B cell (primary cell): ENCODE measurements at regions of chr2 and their contacts with region 1.

Region 1: GRCh38 chr2:71226965-71227560 is at the start of gene PAIP2B:
- DNase-seq: peak; percentile 98
- ATAC-seq: peak; percentile 91
- H3K4me3 ChIP-seq: peak within 1 kb of the TSS; percentile 33 to 86 (median 79)
- H3K4me3 Mint-ChIP-seq: peak within 1 kb of the TSS; percentile 95
- H3K27ac ChIP-seq: peak within 1 kb of the TSS; percentile 63 to 82
- H3K27ac Mint-ChIP-seq: peak within 1 kb of the TSS; percentile 95
- H3K4me1 ChIP-seq: peaks cover 15 to 21% of the 10 kb centered on the region in 2 donors
- H3K4me1 Mint-ChIP-seq: peaks cover 28% of the 10 kb centered on the region
- H3K27me3 ChIP-seq: no peaks in the 10 kb centered on the region
- H3K27me3 Mint-ChIP-seq: peaks cover 5% of the 10 kb centered on the region
- CTCF ChIP-seq: no peak
- total RNA-seq, gene PAIP2B: 10.1 and 10.2 TPM in 2 replicates

Region 2: GRCh38 chr2:70977605-70978205 is 249.4 kb before region 1 on chr2:
- CTCF ChIA-PET with region 1: no interaction called
- POLR2A ChIA-PET with region 1: no interaction called
- intact Hi-C with region 1: loop called (anchors 5 kb)
- DNase-seq: peak; percentile 57
- ATAC-seq: no peak
- H3K4me3 ChIP-seq: peak overlapping the region; percentile 52 to 84 (median 64)
- H3K4me3 Mint-ChIP-seq: peak overlapping the region; percentile 95
- H3K27ac ChIP-seq: peak overlapping the region; percentile 43 to 79
- H3K27ac Mint-ChIP-seq: peak overlapping the region; percentile 93
- H3K4me1 ChIP-seq: peaks cover 16 to 22% of the 10 kb centered on the region in 2 donors
- H3K4me1 Mint-ChIP-seq: peaks cover 22% of the 10 kb centered on the region
- H3K27me3 ChIP-seq: no peaks in the 10 kb centered on the region
- H3K27me3 Mint-ChIP-seq: peaks cover 15% of the 10 kb centered on the region
- CTCF ChIP-seq: no peak

Region 3: GRCh38 chr2:71130113-71130904 is 96.8 kb before region 1 on chr2 and contains the starts of genes MCEE and MPHOSPH10:
- CTCF ChIA-PET with region 1: interaction called, 3 read pairs
- POLR2A ChIA-PET with region 1: no interaction called
- intact Hi-C with region 1: loop called (anchors 1 kb)
- DNase-seq: peak; percentile 92
- ATAC-seq: peak; percentile 93
- H3K4me3 ChIP-seq: peak within 1 kb of the TSS; percentile 82 to 97 (median 90)
- H3K4me3 Mint-ChIP-seq: no peak within 1 kb of the TSS
- H3K27ac ChIP-seq: peak within 1 kb of the TSS; percentile 73 to 81
- H3K27ac Mint-ChIP-seq: no peak within 1 kb of the TSS
- H3K4me1 ChIP-seq: peaks cover 20 to 25% of the 10 kb centered on the region in 2 donors
- H3K4me1 Mint-ChIP-seq: peaks cover 19% of the 10 kb centered on the region
- H3K27me3 ChIP-seq: no peaks in the 10 kb centered on the region
- H3K27me3 Mint-ChIP-seq: no peaks in the 10 kb centered on the region
- CTCF ChIP-seq: no peak
- total RNA-seq, gene MCEE: 17.6 and 21.7 TPM in 2 replicates
- total RNA-seq, gene MPHOSPH10: 45.8 and 51.8 TPM in 2 replicates

Region 4: DNA sequence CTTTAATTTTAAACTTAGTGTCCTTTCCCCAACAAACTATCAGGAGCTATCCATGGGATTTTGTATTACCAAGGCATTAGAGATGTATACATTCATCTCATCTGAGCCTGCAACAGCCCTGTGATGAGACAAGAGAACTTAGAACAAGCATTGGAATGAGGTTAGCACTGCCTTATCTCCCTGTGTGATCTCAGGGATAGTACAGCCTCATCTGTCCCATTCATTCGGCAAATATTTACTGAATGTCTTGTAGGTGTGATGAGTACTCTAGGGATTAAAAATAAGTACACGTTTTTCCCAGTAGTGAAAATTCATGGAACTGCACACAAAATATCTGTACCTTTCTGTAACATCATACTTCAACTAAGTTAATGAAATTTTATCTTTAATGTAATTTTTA is 45.7 kb before region 1 on chr2:
- CTCF ChIA-PET with region 1: no interaction called
- POLR2A ChIA-PET with region 1: no interaction called
- intact Hi-C with region 1: no loop called
- DNase-seq: no peak
- ATAC-seq: no peak
- H3K4me3 ChIP-seq: no peak overlapping the region
- H3K4me3 Mint-ChIP-seq: no peak overlapping the region
- H3K27ac ChIP-seq: no peak overlapping the region
- H3K27ac Mint-ChIP-seq: no peak overlapping the region
- H3K4me1 ChIP-seq: no peaks in the 10 kb centered on the region
- H3K4me1 Mint-ChIP-seq: peaks cover 1% of the 10 kb centered on the region
- H3K27me3 ChIP-seq: no peaks in the 10 kb centered on the region
- H3K27me3 Mint-ChIP-seq: peaks cover 5% of the 10 kb centered on the region
- CTCF ChIP-seq: no peak

Region 5: GRCh38 chr2:71299507-71299906 is 72.4 kb after region 1 on chr2:
- CTCF ChIA-PET with region 1: interaction called, 27 read pairs
- POLR2A ChIA-PET with region 1: no interaction called
- intact Hi-C with region 1: no loop called
- DNase-seq: peak; percentile 57
- ATAC-seq: no peak
- H3K4me3 ChIP-seq: no peak overlapping the region
- H3K4me3 Mint-ChIP-seq: no peak overlapping the region
- H3K27ac ChIP-seq: no peak overlapping the region
- H3K27ac Mint-ChIP-seq: no peak overlapping the region
- H3K4me1 ChIP-seq: no peaks in the 10 kb centered on the region
- H3K4me1 Mint-ChIP-seq: no peaks in the 10 kb centered on the region
- H3K27me3 ChIP-seq: no peaks in the 10 kb centered on the region
- H3K27me3 Mint-ChIP-seq: no peaks in the 10 kb centered on the region
- CTCF ChIP-seq: peak; percentile 94

Region 6: DNA sequence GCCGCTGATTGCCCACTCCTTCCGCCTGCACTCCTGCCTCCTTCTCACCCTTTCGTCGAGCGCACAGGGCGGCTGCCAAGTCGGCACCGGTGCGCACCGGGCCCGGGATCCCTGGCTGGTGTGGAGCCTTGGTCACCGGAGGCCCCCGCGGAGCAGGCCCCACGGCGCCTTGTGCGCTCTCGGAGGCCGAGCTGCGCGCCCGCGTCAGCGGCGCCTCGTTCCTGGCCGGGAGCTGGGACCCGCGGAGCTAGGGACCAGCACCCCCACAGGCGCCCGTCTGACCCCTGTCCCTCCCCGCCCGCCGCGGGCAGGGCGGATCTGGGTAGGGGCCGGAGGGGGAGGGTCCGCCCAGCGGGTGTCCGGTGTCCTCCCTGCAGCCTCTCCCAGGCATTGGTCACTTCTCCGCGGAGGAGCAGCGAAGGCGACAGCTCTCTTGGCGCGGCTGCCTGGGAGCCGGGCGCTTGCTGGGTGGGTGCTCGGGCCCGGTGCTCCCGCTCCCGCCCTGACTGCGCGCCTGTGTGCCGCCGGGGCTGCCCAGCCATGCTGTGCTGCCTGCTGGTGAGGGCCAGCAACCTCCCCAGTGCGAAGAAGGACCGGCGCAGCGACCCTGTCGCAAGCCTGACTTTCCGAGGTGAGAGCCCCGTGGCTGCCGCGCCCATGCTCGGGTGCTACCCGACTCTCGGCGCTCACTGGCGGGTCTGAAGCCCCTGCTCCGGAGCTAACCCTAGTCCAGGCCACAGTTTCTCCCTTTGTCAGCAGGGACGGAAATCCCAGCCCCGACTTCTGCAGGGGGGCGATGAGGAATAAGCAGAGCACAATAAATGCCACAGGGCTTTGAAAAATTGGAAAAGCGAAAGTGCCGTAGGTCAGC is 239.5 kb after region 1 on chr2:
- CTCF ChIA-PET with region 1: no interaction called
- POLR2A ChIA-PET with region 1: interaction called, 12 read pairs
- intact Hi-C with region 1: no loop called
- DNase-seq: peak; percentile 8
- ATAC-seq: peak; percentile 14
- H3K4me3 ChIP-seq: peak overlapping the region; percentile 11 to 62 (median 53)
- H3K4me3 Mint-ChIP-seq: peak overlapping the region; percentile 85
- H3K27ac ChIP-seq: no peak overlapping the region
- H3K27ac Mint-ChIP-seq: no peak overlapping the region
- H3K4me1 ChIP-seq: peaks cover 12 to 14% of the 10 kb centered on the region in 2 donors
- H3K4me1 Mint-ChIP-seq: peaks cover 9% of the 10 kb centered on the region
- H3K27me3 ChIP-seq: peaks cover 0 to 55% (median 26%) of the 10 kb centered on the region in 4 experiments
- H3K27me3 Mint-ChIP-seq: peaks cover 35% of the 10 kb centered on the region
- CTCF ChIP-seq: no peak